ENCODE measurements at regions of chr5 and their contacts with region 1.

Region 1: GRCh38 chr5:58460732-58461286 is 923 bp upstream of the PLK2 start:
- DNase-seq: peak; percentile 94
- H3K4me3 Mint-ChIP-seq: peak overlapping the region; percentile 92
- H3K27ac Mint-ChIP-seq: peak overlapping the region; percentile 96
- H3K4me1 Mint-ChIP-seq: peaks cover 29% of the 10 kb centered on the region
- H3K27me3 Mint-ChIP-seq: no peaks in the 10 kb centered on the region
- CTCF ChIP-seq: peak; percentile 72

Region 2: DNA sequence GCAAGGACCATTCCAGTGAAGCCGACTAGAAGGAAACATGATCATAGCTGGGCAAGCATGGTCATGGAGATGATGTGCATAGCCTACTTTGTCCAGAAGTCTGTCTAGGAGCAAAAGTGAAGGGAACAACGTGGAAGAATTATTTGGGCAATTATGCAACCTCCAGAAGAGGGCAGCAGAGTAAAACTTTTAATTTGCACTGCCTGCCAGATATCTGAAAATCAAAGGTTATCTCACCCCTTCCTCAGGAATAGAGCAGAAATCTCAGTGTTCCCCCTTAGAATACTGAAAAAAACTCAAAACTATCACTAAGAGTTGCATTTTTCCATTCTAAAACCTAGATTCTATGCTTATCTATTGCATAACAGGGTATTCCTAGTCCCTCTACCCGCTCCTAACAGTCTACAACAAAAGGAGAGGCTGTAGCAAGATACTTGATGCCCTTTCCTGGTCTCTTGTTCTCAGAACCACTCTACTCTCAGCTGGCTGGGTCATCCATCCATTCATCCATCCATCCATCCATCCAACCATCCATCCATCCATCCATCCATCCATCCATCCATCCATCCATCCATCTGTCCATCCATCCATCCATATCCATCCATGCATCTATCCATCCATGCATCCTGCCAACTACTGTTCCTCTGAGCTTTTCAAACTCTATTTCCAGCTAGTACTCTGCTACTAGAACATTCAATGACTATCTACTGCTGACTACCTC is 1559.8 kb before region 1 on chr5:
- CTCF ChIA-PET with region 1: no interaction called
- POLR2A ChIA-PET with region 1: no interaction called
- intact Hi-C with region 1: loop called (anchors 5 kb)
- DNase-seq: peak; percentile 63
- H3K4me3 Mint-ChIP-seq: no peak overlapping the region
- H3K27ac Mint-ChIP-seq: no peak overlapping the region
- H3K4me1 Mint-ChIP-seq: no peaks in the 10 kb centered on the region
- H3K27me3 Mint-ChIP-seq: no peaks in the 10 kb centered on the region
- CTCF ChIP-seq: peak; percentile 78

Region 3: GRCh38 chr5:57494104-57495098 is 966.4 kb before region 1 on chr5:
- CTCF ChIA-PET with region 1: interaction called, 48 read pairs
- POLR2A ChIA-PET with region 1: interaction called, 8 read pairs
- intact Hi-C with region 1: loop called (anchors 1 kb)
- DNase-seq: peak; percentile 99
- H3K4me3 Mint-ChIP-seq: peak overlapping the region; percentile 32
- H3K27ac Mint-ChIP-seq: peak overlapping the region; percentile 84
- H3K4me1 Mint-ChIP-seq: peaks cover 42% of the 10 kb centered on the region
- H3K27me3 Mint-ChIP-seq: no peaks in the 10 kb centered on the region
- CTCF ChIP-seq: no peak

Region 4: DNA sequence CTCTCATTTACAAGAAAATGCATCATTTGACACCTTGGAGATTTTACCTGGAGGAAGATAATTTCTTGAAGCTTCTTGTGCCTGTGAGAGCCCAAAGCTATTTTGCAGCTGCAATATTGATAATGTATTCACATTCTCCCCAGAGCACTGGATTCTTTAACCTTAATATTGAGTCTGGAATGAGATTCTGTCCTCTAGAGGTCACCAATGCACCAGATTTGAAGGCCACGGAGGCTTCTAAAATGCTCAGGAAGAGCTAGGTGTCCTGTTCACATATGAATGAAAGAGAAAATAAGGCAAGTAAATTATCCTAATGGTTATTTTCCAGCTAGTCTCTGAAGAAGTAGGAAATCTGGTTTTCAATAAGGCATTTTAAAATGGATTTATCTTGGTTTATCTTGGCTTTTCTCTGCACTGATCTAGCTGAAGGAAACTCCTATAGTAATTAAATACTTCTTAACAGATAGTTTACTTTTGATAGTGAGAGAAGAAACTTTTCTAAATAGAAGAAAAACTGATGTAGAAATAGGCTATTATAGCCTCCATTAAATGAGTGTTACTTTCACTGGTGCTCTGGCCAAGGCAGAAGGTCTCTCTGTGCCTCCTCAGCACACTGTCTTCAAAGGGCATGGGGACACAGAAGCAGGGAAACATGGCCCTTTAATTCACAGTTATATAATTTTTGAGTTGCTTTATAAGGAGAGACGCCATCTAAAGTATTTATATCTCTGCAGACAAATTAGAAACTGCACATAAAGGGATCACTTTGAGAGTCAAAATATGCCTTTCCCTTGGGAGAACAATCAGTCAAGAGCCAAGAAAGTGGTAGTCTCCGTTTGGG is 681.2 kb before region 1 on chr5:
- CTCF ChIA-PET with region 1: interaction called, 151 read pairs
- POLR2A ChIA-PET with region 1: interaction called, 57 read pairs
- intact Hi-C with region 1: loop called (anchors 1 kb)
- DNase-seq: peak; percentile 78
- H3K4me3 Mint-ChIP-seq: no peak overlapping the region
- H3K27ac Mint-ChIP-seq: no peak overlapping the region
- H3K4me1 Mint-ChIP-seq: peaks cover 6% of the 10 kb centered on the region
- H3K27me3 Mint-ChIP-seq: no peaks in the 10 kb centered on the region
- CTCF ChIP-seq: peak; percentile 64

Region 5: DNA sequence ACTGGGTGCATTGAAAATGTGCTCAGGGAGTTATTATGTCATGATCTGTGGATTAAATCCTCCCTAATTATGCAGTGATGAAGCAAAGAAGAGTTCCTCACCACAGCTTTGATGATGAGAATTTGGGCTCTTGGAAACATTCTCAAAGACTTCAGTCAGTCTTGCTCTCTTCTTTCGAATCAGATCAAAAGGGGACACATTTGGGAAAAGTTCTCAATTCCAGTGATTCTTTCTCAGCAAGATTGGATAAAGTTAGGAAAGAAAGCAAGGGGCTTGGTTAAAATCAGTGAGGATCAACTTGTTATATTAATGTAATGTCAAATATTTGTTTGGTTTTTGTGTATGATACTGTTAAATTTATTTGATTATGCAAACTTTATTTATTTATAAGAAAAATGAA is 566.9 kb before region 1 on chr5:
- CTCF ChIA-PET with region 1: interaction called, 215 read pairs
- POLR2A ChIA-PET with region 1: interaction called, 129 read pairs
- intact Hi-C with region 1: no loop called
- DNase-seq: no peak
- H3K4me3 Mint-ChIP-seq: no peak overlapping the region
- H3K27ac Mint-ChIP-seq: no peak overlapping the region
- H3K4me1 Mint-ChIP-seq: peaks cover 19% of the 10 kb centered on the region
- H3K27me3 Mint-ChIP-seq: no peaks in the 10 kb centered on the region
- CTCF ChIP-seq: no peak

Region 6: DNA sequence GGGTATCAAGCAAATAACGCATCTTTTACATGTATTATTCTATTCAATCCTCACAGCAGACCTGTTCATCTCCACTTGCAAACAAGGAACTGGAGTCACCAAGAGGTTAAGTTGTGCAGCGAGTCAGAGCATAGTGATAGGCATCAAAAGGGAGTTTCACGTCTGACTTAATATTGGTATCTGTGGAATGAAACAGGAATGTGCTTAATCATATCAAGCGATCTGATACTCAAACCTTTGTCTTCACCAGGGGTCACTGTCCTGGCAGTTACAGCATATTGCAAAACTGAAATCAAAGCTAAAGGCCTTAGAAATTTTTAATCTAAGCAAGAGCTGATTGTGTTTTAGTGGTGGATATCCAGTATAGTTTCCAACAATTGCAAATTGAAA is 272.6 kb before region 1 on chr5:
- CTCF ChIA-PET with region 1: interaction called, 5 read pairs
- POLR2A ChIA-PET with region 1: interaction called, 34 read pairs
- intact Hi-C with region 1: loop called (anchors 1 kb)
- DNase-seq: peak; percentile 54
- H3K4me3 Mint-ChIP-seq: no peak overlapping the region
- H3K27ac Mint-ChIP-seq: no peak overlapping the region
- H3K4me1 Mint-ChIP-seq: peaks cover 28% of the 10 kb centered on the region
- H3K27me3 Mint-ChIP-seq: no peaks in the 10 kb centered on the region
- CTCF ChIP-seq: no peak

Region 7: GRCh38 chr5:58318468-58318867 is 142.3 kb before region 1 on chr5:
- CTCF ChIA-PET with region 1: interaction called, 7 read pairs
- POLR2A ChIA-PET with region 1: interaction called, 16 read pairs
- intact Hi-C with region 1: loop called (anchors 10 kb)
- DNase-seq: no peak
- H3K4me3 Mint-ChIP-seq: no peak overlapping the region
- H3K27ac Mint-ChIP-seq: no peak overlapping the region
- H3K4me1 Mint-ChIP-seq: peaks cover 12% of the 10 kb centered on the region
- H3K27me3 Mint-ChIP-seq: no peaks in the 10 kb centered on the region
- CTCF ChIP-seq: no peak

Region 8: GRCh38 chr5:59180515-59180914 is 719.7 kb after region 1 on chr5:
- CTCF ChIA-PET with region 1: no interaction called
- POLR2A ChIA-PET with region 1: no interaction called
- intact Hi-C with region 1: no loop called
- DNase-seq: no peak
- H3K4me3 Mint-ChIP-seq: no peak overlapping the region
- H3K27ac Mint-ChIP-seq: no peak overlapping the region
- H3K4me1 Mint-ChIP-seq: peaks cover 5% of the 10 kb centered on the region
- H3K27me3 Mint-ChIP-seq: no peaks in the 10 kb centered on the region
- CTCF ChIP-seq: no peak

Measured in MCF 10A (cell line).